ENCODE measurements at regions of chr2 and their contacts with region 1.

Region 1: DNA sequence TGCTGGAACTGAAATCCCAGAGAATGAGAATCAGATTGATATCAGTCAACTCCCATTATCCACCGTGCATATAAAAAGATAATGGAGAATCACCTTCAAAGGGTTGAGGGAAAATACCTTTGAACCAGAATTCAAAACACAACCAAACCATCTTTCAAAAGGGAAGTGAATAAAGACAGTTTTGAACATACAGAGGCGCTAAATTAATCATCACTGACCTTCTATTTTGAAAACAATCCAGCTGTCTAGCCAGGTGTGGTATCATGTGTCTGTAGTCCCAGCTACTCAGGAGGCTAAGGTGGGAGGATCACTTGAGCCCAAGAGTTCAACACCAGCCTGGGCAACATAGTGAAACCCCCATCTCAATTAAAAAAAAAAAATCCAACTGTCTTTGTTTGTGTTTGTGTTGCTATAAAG is 63.6 kb downstream of the TRABD2A start:
- DNase-seq: no peak
- H3K4me3 Mint-ChIP-seq: no peak overlapping the region
- H3K27ac Mint-ChIP-seq: peak overlapping the region; percentile 45
- H3K4me1 Mint-ChIP-seq: peaks cover 29% of the 10 kb centered on the region
- H3K27me3 Mint-ChIP-seq: no peaks in the 10 kb centered on the region

Region 2: GRCh38 chr2:84152462-84152861 is 664.8 kb before region 1 on chr2:
- intact Hi-C with region 1: no loop called
- DNase-seq: no peak
- H3K4me3 Mint-ChIP-seq: no peak overlapping the region
- H3K27ac Mint-ChIP-seq: no peak overlapping the region
- H3K4me1 Mint-ChIP-seq: no peaks in the 10 kb centered on the region
- H3K27me3 Mint-ChIP-seq: no peaks in the 10 kb centered on the region

Region 3: GRCh38 chr2:84495539-84496146 is 321.6 kb before region 1 on chr2:
- intact Hi-C with region 1: loop called (anchors 1 kb)
- DNase-seq: peak; percentile 16
- H3K4me3 Mint-ChIP-seq: no peak overlapping the region
- H3K27ac Mint-ChIP-seq: no peak overlapping the region
- H3K4me1 Mint-ChIP-seq: peaks cover 7% of the 10 kb centered on the region
- H3K27me3 Mint-ChIP-seq: no peaks in the 10 kb centered on the region

Region 4: GRCh38 chr2:84781942-84782716 is 35.1 kb before region 1 on chr2:
- intact Hi-C with region 1: loop called (anchors 1 kb)
- DNase-seq: peak; percentile 44
- H3K4me3 Mint-ChIP-seq: no peak overlapping the region
- H3K27ac Mint-ChIP-seq: peak overlapping the region; percentile 85
- H3K4me1 Mint-ChIP-seq: peaks cover 69% of the 10 kb centered on the region
- H3K27me3 Mint-ChIP-seq: no peaks in the 10 kb centered on the region

Region 5: DNA sequence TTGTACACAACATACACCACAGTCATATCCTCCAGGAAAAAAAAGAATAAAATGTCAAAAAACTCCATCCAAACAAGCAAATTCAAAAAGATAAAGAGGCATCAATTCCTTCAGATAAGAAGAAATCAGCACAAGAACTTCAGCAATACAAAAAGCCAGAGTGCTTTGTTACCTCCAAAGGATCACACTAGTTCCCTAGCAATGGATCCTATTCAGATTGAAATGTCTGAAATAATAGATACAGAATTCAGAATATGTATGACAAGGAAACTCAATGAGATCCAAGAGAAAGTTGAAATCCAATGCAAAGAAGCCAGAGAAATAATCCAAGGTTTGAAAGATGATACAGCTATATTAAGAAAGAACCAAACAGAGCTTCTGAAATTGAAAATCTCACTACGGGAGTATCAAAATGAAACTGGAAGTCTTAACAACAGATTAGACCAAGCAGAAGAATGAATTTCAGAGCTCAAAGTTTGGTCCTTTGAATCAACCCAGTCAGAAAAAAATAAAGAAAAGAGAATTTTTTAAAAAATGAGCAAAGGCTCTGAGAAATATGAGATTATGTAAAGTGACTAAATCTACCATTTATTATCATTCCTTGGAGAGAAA is 16.9 kb before region 1 on chr2:
- intact Hi-C with region 1: loop called (anchors 2 kb)
- DNase-seq: no peak
- H3K4me3 Mint-ChIP-seq: peak overlapping the region; percentile 7
- H3K27ac Mint-ChIP-seq: no peak overlapping the region
- H3K4me1 Mint-ChIP-seq: peaks cover 11% of the 10 kb centered on the region
- H3K27me3 Mint-ChIP-seq: no peaks in the 10 kb centered on the region

Region 6: GRCh38 chr2:84840306-84840705 is 23.1 kb after region 1 on chr2:
- intact Hi-C with region 1: loop called (anchors 1 kb)
- DNase-seq: no peak
- H3K4me3 Mint-ChIP-seq: peak overlapping the region; percentile 51
- H3K27ac Mint-ChIP-seq: peak overlapping the region; percentile 24
- H3K4me1 Mint-ChIP-seq: peaks cover 55% of the 10 kb centered on the region
- H3K27me3 Mint-ChIP-seq: no peaks in the 10 kb centered on the region

Region 7: GRCh38 chr2:84846041-84846663 is 28.9 kb after region 1 on chr2:
- intact Hi-C with region 1: loop called (anchors 1 kb)
- DNase-seq: peak; percentile 36
- H3K4me3 Mint-ChIP-seq: peak overlapping the region; percentile 64
- H3K27ac Mint-ChIP-seq: peak overlapping the region; percentile 96
- H3K4me1 Mint-ChIP-seq: peaks cover 89% of the 10 kb centered on the region
- H3K27me3 Mint-ChIP-seq: no peaks in the 10 kb centered on the region

Region 8: DNA sequence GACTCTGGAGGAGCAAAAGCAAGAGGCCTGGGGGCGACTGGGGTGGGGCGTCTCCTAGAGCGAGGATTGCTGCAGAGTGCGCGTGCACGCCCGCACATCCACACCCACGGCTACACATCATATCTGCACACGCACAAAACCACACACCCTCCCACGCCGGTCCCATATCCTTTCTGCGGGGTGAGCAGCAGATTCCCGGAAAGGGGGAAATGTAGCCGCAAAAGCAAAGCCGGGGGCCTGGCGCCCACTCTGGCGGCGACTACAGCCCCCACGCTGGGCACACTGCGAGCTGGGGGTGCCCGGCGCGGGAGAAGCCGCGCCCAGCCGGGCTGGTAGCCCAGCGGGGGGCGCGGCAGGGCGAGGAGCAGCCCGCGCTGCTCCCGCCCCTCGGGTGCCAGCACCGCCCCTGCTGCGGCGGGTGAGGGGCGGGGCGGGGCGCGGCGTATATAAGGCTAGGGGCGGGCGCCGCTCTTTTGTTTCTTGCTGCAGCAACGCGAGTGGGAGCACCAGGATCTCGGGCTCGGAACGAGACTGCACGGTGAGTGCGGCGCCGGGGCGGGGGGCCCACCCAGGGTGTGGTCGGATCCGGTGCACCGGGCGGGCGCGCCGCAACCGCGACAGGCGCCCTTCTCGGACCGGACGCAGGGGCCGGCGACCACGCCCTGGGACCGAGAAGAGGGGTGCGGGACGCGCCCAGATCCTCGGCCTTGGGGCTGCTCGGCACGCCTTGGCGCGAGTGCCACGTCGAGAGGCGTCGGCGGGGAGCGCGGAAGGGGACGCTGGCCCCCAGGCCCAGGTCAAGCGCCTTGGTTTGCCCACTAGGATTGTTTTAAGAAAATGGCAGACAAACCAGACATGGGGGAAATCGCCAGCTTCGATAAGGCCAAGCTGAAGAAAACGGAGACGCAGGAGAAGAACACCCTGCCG is 88.2 kb after region 1 on chr2 and contains the start of gene TMSB10:
- intact Hi-C with region 1: loop called (anchors 1 kb)
- DNase-seq: peak; percentile 88
- H3K4me3 Mint-ChIP-seq: peak within 1 kb of the TSS; percentile 97
- H3K27ac Mint-ChIP-seq: peak within 1 kb of the TSS; percentile 95
- H3K4me1 Mint-ChIP-seq: peaks cover 78% of the 10 kb centered on the region
- H3K27me3 Mint-ChIP-seq: no peaks in the 10 kb centered on the region
- total RNA-seq, gene TMSB10: 2,415 and 2,510 TPM in 2 replicates